Activated CD8-positive, alpha-beta memory T cell treated with anti-CD3 and anti-CD28 coated beads, Interleukin-2, amount 10 ng/mL, durations not matched to agents 7 days and 5 days (primary cell): ENCODE measurements at regions of chr15 and their contacts with region 1.

Region 1: DNA sequence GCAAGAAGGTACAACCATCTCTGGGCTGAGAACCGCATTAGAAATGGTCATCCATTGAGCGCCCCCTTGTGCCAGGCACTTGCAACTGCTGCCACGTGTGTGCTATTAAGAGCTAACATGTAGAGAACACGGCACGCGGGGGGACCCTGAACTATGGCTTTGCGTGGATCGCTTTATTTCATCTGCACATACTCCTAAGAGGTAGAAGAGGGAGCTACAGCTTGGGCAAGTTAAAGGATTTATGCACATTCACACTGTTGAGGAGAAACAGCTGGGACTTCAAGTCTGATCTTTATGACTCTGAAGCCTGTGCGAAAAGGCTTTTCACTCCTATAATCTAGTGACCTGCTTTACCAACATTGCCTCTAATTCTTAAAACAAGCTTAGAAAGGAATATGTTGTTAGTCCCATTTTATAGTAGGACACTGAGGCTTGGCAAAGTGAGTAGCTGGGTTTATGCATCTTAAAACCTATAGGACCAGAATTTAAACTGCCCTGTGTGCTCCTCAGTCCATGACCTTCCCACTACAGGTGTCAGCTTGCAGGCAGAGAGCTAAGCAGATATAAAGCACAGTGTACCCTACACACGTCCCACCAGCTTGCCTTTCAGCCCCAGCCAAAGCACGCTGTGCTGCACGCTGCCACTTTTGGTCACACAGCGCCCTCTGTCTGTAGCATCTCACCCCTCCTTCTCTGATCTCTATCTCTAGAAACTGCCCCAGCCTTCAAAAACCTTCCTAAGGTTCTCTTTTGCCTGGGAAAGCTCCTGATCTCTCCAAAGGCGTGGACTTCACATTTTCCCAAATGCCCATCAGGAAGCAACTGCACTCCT is 57.8 kb downstream of the STARD5 start:
- DNase-seq: peak; percentile 90
- ATAC-seq: peak; percentile 96
- H3K4me3 Mint-ChIP-seq: peak overlapping the region; percentile 33
- H3K27ac Mint-ChIP-seq: peak overlapping the region; percentile 67
- H3K4me1 Mint-ChIP-seq: peaks cover 34% of the 10 kb centered on the region
- H3K27me3 Mint-ChIP-seq: peaks cover 11% of the 10 kb centered on the region

Region 2: DNA sequence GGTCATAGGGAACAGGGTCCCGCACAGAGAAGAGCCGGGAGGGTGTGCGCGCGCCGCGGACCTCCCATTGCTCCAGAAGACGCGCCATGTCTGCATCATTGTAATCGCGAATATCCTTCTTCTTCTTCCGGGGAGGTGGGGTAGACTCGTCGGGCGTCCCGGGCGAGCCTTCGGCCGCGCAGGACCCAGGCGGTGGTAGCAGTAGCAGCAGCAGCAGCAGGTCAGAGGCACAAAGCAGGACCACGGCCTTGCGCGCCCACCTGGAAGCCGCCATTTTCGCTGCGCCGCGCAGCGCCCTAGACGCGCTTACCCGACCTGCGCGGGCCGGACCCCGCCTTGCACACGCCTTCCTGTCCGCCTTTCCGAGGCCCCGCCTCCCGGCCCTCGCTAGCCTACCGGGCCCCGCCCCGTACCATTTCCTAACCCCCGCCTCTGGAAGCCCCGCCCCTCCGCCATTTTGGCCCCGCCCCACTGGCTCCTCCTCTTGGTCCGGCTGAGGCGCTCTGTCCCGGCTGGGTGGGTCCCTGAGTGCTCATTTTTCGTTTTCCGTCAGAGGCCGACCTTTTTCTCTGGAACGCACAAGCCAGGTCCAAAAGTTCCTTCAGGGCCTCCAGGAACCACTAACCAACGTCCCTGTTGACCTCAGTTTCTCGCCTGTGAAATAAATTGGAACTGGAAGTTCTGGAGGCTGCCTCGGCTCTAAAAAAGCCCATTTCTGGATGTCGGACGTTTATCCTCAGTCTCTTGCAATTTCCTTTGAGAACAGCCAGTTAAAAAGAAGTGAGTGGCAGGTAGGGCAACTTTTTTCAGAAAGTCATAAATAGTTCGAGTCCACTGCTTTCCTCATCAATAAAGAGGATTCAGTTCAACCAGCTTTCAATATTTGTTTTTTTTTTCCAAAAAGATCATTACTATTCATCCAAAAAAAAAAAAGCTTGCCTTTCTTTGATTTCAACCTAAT is 276.4 kb before region 1 on chr15 and contains the start of gene MESD:
- CTCF ChIA-PET with region 1: interaction called, 52 read pairs
- DNase-seq: peak; percentile 98
- ATAC-seq: peak; percentile 99
- H3K4me3 Mint-ChIP-seq: peak within 1 kb of the TSS; percentile 100
- H3K27ac Mint-ChIP-seq: peak within 1 kb of the TSS; percentile 96
- H3K4me1 Mint-ChIP-seq: peaks cover 58% of the 10 kb centered on the region
- H3K27me3 Mint-ChIP-seq: no peaks in the 10 kb centered on the region
- total RNA-seq, gene MESD: 27.6 to 27.8 TPM

Region 3: GRCh38 chr15:81117136-81117535 is 149.0 kb before region 1 on chr15:
- CTCF ChIA-PET with region 1: interaction called, 276 read pairs
- DNase-seq: no peak
- ATAC-seq: no peak
- H3K4me3 Mint-ChIP-seq: no peak overlapping the region
- H3K27ac Mint-ChIP-seq: no peak overlapping the region
- H3K4me1 Mint-ChIP-seq: no peaks in the 10 kb centered on the region
- H3K27me3 Mint-ChIP-seq: peaks cover 57% of the 10 kb centered on the region

Region 4: GRCh38 chr15:81170511-81170910 is 95.6 kb before region 1 on chr15:
- CTCF ChIA-PET with region 1: interaction called, 20 read pairs
- DNase-seq: no peak
- ATAC-seq: no peak
- H3K4me3 Mint-ChIP-seq: no peak overlapping the region
- H3K27ac Mint-ChIP-seq: no peak overlapping the region
- H3K4me1 Mint-ChIP-seq: peaks cover 14% of the 10 kb centered on the region
- H3K27me3 Mint-ChIP-seq: peaks cover 28% of the 10 kb centered on the region

Region 5: GRCh38 chr15:81308260-81308659 is 42.1 kb after region 1 on chr15:
- CTCF ChIA-PET with region 1: interaction called, 15 read pairs
- DNase-seq: no peak
- ATAC-seq: no peak
- H3K4me3 Mint-ChIP-seq: no peak overlapping the region
- H3K27ac Mint-ChIP-seq: no peak overlapping the region
- H3K4me1 Mint-ChIP-seq: peaks cover 31% of the 10 kb centered on the region
- H3K27me3 Mint-ChIP-seq: no peaks in the 10 kb centered on the region

Region 6: DNA sequence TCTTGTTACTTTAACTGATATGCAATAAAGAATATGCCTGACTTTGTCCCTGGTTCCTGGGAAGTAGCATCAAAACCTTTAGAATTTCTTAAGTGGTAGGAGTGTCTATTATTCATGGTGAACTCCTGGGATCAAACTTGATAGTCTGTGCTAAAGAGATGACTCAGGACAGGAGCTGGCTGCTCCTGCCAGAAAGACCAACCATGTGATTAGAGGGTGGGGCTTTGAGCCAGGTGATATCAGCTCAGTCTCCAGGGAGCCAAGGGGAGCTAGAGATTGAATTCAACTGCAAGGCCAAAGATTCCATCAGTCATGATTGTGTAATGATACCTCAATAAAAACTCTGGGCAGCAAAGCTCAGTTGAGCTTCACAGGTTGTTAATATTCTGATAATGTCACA is 128.4 kb after region 1 on chr15:
- CTCF ChIA-PET with region 1: interaction called, 34 read pairs
- DNase-seq: no peak
- ATAC-seq: no peak
- H3K4me3 Mint-ChIP-seq: no peak overlapping the region
- H3K27ac Mint-ChIP-seq: no peak overlapping the region
- H3K4me1 Mint-ChIP-seq: no peaks in the 10 kb centered on the region
- H3K27me3 Mint-ChIP-seq: no peaks in the 10 kb centered on the region

Region 7: GRCh38 chr15:81924729-81925128 is 658.6 kb after region 1 on chr15:
- CTCF ChIA-PET with region 1: no interaction called
- DNase-seq: no peak
- ATAC-seq: no peak
- H3K4me3 Mint-ChIP-seq: no peak overlapping the region
- H3K27ac Mint-ChIP-seq: no peak overlapping the region
- H3K4me1 Mint-ChIP-seq: no peaks in the 10 kb centered on the region
- H3K27me3 Mint-ChIP-seq: no peaks in the 10 kb centered on the region